B cell (primary cell): ENCODE measurements at regions of chr7 and their contacts with region 1.

Region 1: GRCh38 chr7:12686894-12687717 is at the start of gene ARL4A:
- DNase-seq: peak; percentile 91
- ATAC-seq: peak; percentile 61
- H3K4me3 ChIP-seq: peak within 1 kb of the TSS; percentile 57 to 98 (median 91)
- H3K4me3 Mint-ChIP-seq: peak within 1 kb of the TSS; percentile 99
- H3K27ac ChIP-seq: peak within 1 kb of the TSS; percentile 99 to 100
- H3K27ac Mint-ChIP-seq: peak within 1 kb of the TSS; percentile 98
- H3K4me1 ChIP-seq: peaks cover 22 to 24% of the 10 kb centered on the region in 2 donors
- H3K4me1 Mint-ChIP-seq: peaks cover 55% of the 10 kb centered on the region
- H3K27me3 ChIP-seq: no peaks in the 10 kb centered on the region
- H3K27me3 Mint-ChIP-seq: no peaks in the 10 kb centered on the region
- CTCF ChIP-seq: peak; percentile 64
- total RNA-seq, gene ARL4A: 14.2 and 15.0 TPM in 2 replicates

Region 2: GRCh38 chr7:12257582-12257981 is 429.5 kb before region 1 on chr7:
- CTCF ChIA-PET with region 1: no interaction called
- POLR2A ChIA-PET with region 1: no interaction called
- intact Hi-C with region 1: loop called (anchors 1 kb)
- DNase-seq: peak; percentile 77
- ATAC-seq: peak; percentile 97
- H3K4me3 ChIP-seq: peak overlapping the region; percentile 4 to 63 (median 36)
- H3K4me3 Mint-ChIP-seq: no peak overlapping the region
- H3K27ac ChIP-seq: peak overlapping the region; percentile 48 to 61
- H3K27ac Mint-ChIP-seq: no peak overlapping the region
- H3K4me1 ChIP-seq: peaks cover 15 to 16% of the 10 kb centered on the region in 2 donors
- H3K4me1 Mint-ChIP-seq: no peaks in the 10 kb centered on the region
- H3K27me3 ChIP-seq: no peaks in the 10 kb centered on the region
- H3K27me3 Mint-ChIP-seq: no peaks in the 10 kb centered on the region
- CTCF ChIP-seq: no peak

Region 3: DNA sequence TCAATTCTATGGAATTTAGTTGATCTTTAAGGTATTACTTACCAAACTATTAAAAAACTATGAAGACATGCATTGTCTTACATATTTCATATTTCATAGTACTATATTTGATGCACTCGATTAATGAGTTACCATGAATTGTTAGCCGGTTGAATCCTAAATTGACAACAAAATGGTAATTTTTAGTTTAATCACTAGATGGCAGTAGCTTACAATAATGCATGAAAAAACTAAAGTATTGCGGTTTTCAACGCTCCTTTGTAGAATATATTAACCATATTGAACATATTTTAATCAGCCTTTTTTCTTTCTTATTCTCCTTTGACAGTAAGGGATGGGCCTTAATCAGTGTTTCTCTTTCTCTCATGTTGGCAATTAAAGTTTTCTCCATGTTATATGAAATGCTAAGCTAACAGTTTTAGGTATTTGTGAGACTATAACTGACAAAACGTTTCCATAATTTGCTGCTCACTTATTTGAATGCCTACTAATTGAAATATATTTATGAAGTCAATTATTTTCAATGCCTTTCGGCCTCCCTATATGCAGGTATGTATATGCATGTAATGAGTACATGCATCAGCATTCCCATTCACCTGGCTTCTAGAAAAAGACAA is 48.1 kb before region 1 on chr7:
- CTCF ChIA-PET with region 1: interaction called, 15 read pairs
- POLR2A ChIA-PET with region 1: interaction called, 3 read pairs
- intact Hi-C with region 1: loop called (anchors 1 kb)
- DNase-seq: peak; percentile 71
- ATAC-seq: peak; percentile 51
- H3K4me3 ChIP-seq: peak overlapping the region in 1 of 5 experiments; percentile 50
- H3K4me3 Mint-ChIP-seq: no peak overlapping the region
- H3K27ac ChIP-seq: peak overlapping the region in 1 of 2 donors; percentile 65
- H3K27ac Mint-ChIP-seq: no peak overlapping the region
- H3K4me1 ChIP-seq: peaks cover 24 to 33% of the 10 kb centered on the region in 2 donors
- H3K4me1 Mint-ChIP-seq: peaks cover 21% of the 10 kb centered on the region
- H3K27me3 ChIP-seq: no peaks in the 10 kb centered on the region
- H3K27me3 Mint-ChIP-seq: peaks cover 3% of the 10 kb centered on the region
- CTCF ChIP-seq: peak; percentile 87

Region 4: GRCh38 chr7:13117103-13117502 is 430.0 kb after region 1 on chr7:
- CTCF ChIA-PET with region 1: interaction called, 8 read pairs
- POLR2A ChIA-PET with region 1: no interaction called
- intact Hi-C with region 1: loop called (anchors 5 kb)
- DNase-seq: peak; percentile 18
- ATAC-seq: no peak
- H3K4me3 ChIP-seq: no peak overlapping the region
- H3K4me3 Mint-ChIP-seq: no peak overlapping the region
- H3K27ac ChIP-seq: no peak overlapping the region
- H3K27ac Mint-ChIP-seq: no peak overlapping the region
- H3K4me1 ChIP-seq: no peaks in the 10 kb centered on the region
- H3K4me1 Mint-ChIP-seq: peaks cover 3% of the 10 kb centered on the region
- H3K27me3 ChIP-seq: no peaks in the 10 kb centered on the region
- H3K27me3 Mint-ChIP-seq: no peaks in the 10 kb centered on the region
- CTCF ChIP-seq: no peak